ENCODE measurements at regions of chr7 and their contacts with region 1.

Region 1: GRCh38 chr7:88243345-88243909 is 23.6 kb upstream of the SRI start:
- DNase-seq: peak in 2 of 4 experiments; percentile 29 to 45
- ATAC-seq: peak; percentile 88
- H3K4me3 ChIP-seq: no peak overlapping the region
- H3K27ac ChIP-seq: no peak overlapping the region
- H3K4me1 ChIP-seq: no peaks in the 10 kb centered on the region
- H3K27me3 ChIP-seq: no peaks in the 10 kb centered on the region
- CTCF ChIP-seq: peak; percentile 54 to 81 (median 68); a peak in 5 of 6 replicates
- EP300 ChIP-seq: no peak
- POLR2A ChIP-seq: no peak
- RAD21 ChIP-seq: peak; percentile 83 to 84

Region 2: DNA sequence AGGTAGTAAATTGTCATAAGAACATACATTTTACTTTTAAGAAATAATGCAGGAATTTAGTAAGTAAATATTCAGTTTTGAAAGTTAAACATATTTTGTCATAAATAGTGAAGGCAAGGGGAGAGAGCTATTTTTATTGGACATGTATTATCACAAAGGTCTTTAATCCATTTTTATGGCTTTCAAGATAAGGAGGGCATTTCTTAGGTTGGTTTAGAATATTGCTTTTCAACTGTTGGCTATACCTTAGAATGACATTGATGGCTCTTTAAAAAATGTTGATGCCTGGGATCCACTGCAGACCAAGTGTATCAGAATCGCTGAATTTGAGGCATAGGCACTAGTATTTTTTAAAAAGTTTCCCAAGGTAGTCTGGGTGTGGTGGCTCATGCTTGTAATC is 275.4 kb before region 1 on chr7:
- CTCF ChIA-PET with region 1: no interaction called
- POLR2A ChIA-PET with region 1: no interaction called
- in situ Hi-C with region 1: no loop called
- intact Hi-C with region 1: no loop called
- DNase-seq: no peak
- ATAC-seq: no peak
- H3K4me3 ChIP-seq: no peak overlapping the region
- H3K27ac ChIP-seq: no peak overlapping the region
- H3K4me1 ChIP-seq: no peaks in the 10 kb centered on the region
- H3K27me3 ChIP-seq: no peaks in the 10 kb centered on the region
- CTCF ChIP-seq: no peak
- EP300 ChIP-seq: no peak
- POLR2A ChIP-seq: no peak
- RAD21 ChIP-seq: no peak

Region 3: GRCh38 chr7:88357781-88358525 is 114.5 kb after region 1 on chr7:
- CTCF ChIA-PET with region 1: interaction called, 3 read pairs
- POLR2A ChIA-PET with region 1: no interaction called
- in situ Hi-C with region 1: no loop called
- intact Hi-C with region 1: loop called (anchors 1 kb)
- DNase-seq: peak in 1 of 4 experiments; percentile 10
- ATAC-seq: peak; percentile 62; the same call in 2 of the 3 replicates
- H3K4me3 ChIP-seq: no peak overlapping the region
- H3K27ac ChIP-seq: no peak overlapping the region
- H3K4me1 ChIP-seq: no peaks in the 10 kb centered on the region
- H3K27me3 ChIP-seq: no peaks in the 10 kb centered on the region
- CTCF ChIP-seq: peak in 2 of 3 experiments; percentile 20 to 37; a peak in 3 of 6 replicates
- EP300 ChIP-seq: no peak
- POLR2A ChIP-seq: no peak
- RAD21 ChIP-seq: peak in 1 of 2 experiments; percentile 26; a peak in 1 of 4 replicates

Region 4: DNA sequence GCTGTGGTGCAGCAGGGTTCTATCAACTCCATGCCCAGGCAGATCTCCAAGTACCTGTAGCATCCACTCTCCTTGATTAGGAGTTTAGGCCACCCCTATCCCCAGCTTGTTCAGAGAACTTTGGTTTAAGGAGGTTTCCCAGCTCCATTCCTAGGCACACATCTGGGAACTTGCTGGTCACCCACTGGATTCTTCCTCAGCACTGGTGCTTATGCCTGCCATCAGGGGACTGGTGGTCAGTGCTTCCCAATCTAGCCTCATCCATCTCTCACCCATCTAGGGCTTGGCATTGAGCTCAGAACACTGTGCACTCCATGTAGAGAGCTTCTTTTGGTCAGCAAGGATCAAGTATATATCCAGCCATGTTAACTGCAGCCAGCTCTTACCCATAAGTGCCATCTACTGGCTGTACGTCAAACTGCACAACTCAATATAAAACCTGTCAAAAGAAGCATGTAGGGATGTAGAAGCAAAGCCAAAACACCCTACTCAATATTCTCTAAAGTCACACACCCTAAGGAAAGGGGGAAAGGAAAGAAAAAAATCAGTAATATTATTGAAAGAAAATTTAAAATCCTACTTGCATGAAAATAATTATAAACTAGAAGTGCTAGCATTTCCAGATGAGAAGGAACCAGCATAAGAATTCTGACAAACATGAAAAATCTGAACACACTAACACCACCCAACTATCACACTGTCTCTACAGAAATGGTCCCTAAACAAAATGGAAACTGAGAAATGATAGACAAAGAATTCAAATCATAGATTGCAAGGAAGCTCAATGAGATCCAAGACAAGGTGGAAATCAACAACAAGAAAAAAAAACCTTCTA is 1379.6 kb after region 1 on chr7:
- CTCF ChIA-PET with region 1: no interaction called
- POLR2A ChIA-PET with region 1: no interaction called
- in situ Hi-C with region 1: no loop called
- intact Hi-C with region 1: loop called (anchors 5 kb)
- DNase-seq: peak in 1 of 4 experiments; percentile 18
- ATAC-seq: peak; percentile 54; the same call in 2 of the 3 replicates
- H3K4me3 ChIP-seq: no peak overlapping the region
- H3K27ac ChIP-seq: no peak overlapping the region
- H3K4me1 ChIP-seq: no peaks in the 10 kb centered on the region
- H3K27me3 ChIP-seq: no peaks in the 10 kb centered on the region
- CTCF ChIP-seq: peak; percentile 23 to 58 (median 57); a peak in 5 of 6 replicates
- EP300 ChIP-seq: no peak
- POLR2A ChIP-seq: no peak
- RAD21 ChIP-seq: peak; percentile 33 to 57; a peak in 3 of 4 replicates

Region 5: GRCh38 chr7:90155206-90155605 is 1911.8 kb after region 1 on chr7:
- CTCF ChIA-PET with region 1: no interaction called
- POLR2A ChIA-PET with region 1: no interaction called
- in situ Hi-C with region 1: no loop called
- intact Hi-C with region 1: loop called (anchors 10 kb)
- DNase-seq: no peak
- ATAC-seq: no peak
- H3K4me3 ChIP-seq: no peak overlapping the region
- H3K27ac ChIP-seq: no peak overlapping the region
- H3K4me1 ChIP-seq: peaks cover 0 to 8% of the 10 kb centered on the region in 2 experiments; a peak in 2 of 5 replicates
- H3K27me3 ChIP-seq: no peaks in the 10 kb centered on the region
- CTCF ChIP-seq: no peak
- EP300 ChIP-seq: no peak
- POLR2A ChIP-seq: no peak
- RAD21 ChIP-seq: no peak

Measured in K562 (cell line).